IMR-90 (cell line): ENCODE measurements at regions of chr7 and their contacts with region 1.

Region 1: DNA sequence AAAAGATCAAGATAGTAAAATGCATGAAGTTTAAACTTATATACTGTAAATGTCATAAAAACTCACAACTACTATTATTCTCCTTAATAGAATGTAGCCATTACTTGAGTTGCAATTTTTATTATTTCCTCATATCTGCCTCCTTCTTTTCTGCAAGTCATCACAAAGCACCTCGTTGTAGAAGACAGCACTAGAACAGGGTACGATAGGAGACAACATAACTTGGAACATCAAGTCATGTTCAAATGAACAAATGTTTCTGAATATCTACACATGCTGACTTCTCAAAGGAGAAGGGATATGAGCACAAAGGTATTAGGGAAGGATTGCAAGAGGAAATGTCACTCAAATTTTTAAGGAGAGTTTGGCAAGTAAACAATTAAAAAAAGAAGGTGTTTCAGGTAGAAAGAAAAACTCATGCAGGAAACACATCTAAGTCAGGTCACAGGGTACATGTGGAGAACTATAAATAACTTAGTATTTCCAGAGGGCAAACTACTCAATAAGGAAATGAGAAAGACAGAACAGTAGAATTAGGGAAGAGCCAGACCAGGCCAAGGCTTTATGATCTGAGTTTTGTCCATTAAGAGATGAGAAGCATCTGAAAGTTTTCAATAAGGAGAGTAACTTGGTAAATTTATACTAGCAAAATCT is 186.7 kb downstream of the CRPPA start:
- DNase-seq: no peak
- ATAC-seq: no peak
- H3K4me3 ChIP-seq: no peak overlapping the region
- H3K27ac ChIP-seq: no peak overlapping the region
- H3K4me1 ChIP-seq: no peaks in the 10 kb centered on the region
- H3K27me3 ChIP-seq: no peaks in the 10 kb centered on the region
- CTCF ChIP-seq: no peak
- POLR2A ChIP-seq: no peak
- RAD21 ChIP-seq: no peak

Region 2: GRCh38 chr7:16278167-16278787 is 43.7 kb after region 1 on chr7:
- CTCF ChIA-PET with region 1: no interaction called
- POLR2A ChIA-PET with region 1: interaction called, 10 read pairs
- dilution Hi-C with region 1: no loop called
- in situ Hi-C with region 1: no loop called
- intact Hi-C with region 1: no loop called
- DNase-seq: no peak
- ATAC-seq: no peak
- H3K4me3 ChIP-seq: no peak overlapping the region
- H3K27ac ChIP-seq: no peak overlapping the region
- H3K4me1 ChIP-seq: no peaks in the 10 kb centered on the region
- H3K27me3 ChIP-seq: no peaks in the 10 kb centered on the region
- CTCF ChIP-seq: no peak
- POLR2A ChIP-seq: no peak
- RAD21 ChIP-seq: no peak